Left cardiac atrium (tissue), 4 donors: ENCODE measurements at regions of chr15 and their contacts with region 1.

Region 1: DNA sequence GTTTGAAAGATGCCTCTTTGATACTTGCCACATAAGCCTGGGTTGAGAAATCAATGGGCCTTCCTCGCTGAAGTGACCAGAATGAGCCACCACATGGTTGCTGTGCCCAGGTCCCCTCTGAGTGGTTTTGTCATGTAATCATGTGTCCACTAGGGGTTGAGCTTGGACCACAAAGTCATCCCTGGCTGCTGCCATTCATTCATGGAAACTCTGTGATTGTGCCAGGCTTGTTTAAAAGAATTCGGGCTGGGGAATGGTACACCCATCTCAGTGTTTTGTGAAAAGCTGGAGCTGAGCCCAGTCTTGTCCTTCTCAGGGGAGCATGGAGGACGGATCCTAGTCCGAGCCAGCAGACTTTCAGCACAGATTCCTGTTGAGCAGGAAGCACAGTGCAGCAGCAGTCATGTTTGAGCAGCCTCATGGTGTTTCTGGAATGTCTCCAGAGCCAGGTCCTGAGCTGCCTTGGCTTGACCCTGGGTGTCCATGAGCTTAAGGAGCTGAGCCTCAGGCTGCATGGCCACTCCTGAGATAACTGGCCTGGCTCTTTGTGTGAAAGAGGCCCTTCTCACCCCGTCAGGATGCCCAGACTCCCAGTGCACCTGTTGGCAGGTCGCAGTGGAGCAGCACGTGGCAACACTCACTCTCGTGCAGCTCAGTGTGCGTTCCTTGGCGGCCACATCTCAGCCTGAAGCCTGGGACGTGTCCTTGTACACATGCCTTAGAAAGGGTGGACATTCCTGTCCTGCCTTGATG is 260.3 kb upstream of the TPM1 start:
- DNase-seq: peak; percentile 86
- ATAC-seq: peak; percentile 92 to 93

Region 2: GRCh38 chr15:62742409-62743171 is 39.6 kb before region 1 on chr15:
- intact Hi-C with region 1: no loop called
- DNase-seq: peak; percentile 66
- ATAC-seq: peak; percentile 69 to 90

Region 3: DNA sequence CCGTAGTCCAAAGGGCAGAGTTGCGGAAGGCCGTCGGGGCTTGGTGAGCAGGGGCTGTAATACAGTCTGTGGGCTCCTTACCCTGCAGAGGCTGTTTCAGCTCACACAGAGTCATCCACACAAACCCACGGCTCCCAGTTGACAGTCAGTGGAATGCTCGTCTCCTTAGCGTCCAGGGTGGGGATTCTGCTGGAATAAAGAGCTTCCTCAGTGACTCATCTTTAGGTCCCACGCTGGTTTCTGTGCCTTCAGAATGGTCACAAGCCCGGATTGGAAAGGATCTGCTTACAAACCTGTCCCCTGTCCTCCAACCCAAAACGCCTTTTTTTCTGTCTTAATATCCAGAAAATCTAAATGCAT is 59.0 kb after region 1 on chr15:
- intact Hi-C with region 1: loop called in 1 of 2 experiments (anchors 5 kb)
- DNase-seq: no peak
- ATAC-seq: peak in 1 of 2 donors; percentile 22

Region 4: GRCh38 chr15:63048115-63048775 is 266.0 kb after region 1 on chr15:
- intact Hi-C with region 1: loop called in 1 of 2 experiments (anchors 5 kb)
- DNase-seq: peak; percentile 91
- ATAC-seq: peak; percentile 80 to 81

Region 5: GRCh38 chr15:63093486-63094205 is 311.4 kb after region 1 on chr15:
- intact Hi-C with region 1: loop called in 1 of 2 experiments (anchors 2 kb)
- DNase-seq: peak; percentile 78
- ATAC-seq: peak; percentile 93

Region 6: DNA sequence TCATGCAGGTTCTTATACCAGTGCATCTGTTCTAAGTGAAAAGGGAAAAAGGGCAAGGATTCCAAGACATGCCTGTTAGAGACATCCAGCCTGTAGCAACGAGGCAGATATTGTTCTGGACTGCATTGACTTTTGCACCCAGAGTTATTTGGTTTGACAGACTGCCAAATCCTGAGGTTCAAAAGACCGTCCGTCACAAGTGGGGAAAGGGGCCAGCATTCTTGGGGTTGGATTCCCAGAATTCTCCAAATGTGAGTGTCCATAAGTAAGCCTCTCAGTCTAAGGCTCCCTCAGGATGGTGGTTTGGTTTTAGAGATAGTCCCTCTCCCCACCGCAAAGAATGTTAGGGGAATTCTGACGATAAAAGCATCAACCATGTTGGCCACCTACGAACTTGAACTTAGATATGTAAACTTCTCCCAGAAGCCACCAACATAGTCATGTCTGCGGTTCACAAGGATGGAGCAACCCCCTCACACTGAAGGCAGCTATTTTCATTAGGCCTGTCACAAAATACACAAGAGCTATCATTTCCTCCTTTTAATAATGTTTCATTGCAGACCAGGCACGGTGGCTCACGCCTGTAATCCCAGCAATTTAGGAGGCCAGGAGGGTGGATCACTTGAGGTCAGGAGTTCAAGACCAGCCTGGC is 325.8 kb after region 1 on chr15:
- intact Hi-C with region 1: loop called in 1 of 2 experiments (anchors 5 kb)
- DNase-seq: peak; percentile 41
- ATAC-seq: peak; percentile 72 to 84